GM12878 (cell line): ENCODE measurements at regions of chr9 and their contacts with region 1.

Region 1: DNA sequence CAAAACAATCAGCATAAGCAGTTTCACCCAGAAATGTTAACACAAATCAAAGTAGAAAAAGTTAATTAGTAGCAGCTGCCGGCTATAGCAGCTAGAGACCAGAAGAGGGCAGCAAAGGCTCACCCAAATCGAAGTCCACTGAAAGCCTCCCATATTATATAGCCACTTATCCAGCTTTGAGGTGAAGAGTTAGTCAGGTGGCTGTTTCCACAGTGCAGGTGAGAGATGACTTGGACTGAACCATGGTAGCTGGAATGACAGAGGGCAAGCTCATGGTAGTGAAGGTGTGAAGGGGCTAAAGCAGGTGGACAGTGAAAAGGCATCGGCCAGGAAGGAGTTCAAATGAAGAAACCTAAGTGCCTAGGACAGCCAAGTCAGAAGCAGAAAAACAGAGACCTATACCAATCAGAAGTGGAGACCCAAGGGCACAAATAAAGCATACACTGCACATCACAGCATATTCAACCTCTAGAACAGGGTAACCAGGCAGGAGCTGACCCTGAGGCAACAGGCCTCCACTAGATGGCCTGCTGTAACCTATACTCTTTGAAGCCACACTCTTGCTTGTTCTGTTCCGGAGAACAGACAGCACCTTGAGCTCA is 7.2 kb upstream of the RNF38 start:
- DNase-seq: peak; percentile 25
- ATAC-seq: peak; percentile 95
- H3K4me3 ChIP-seq: no peak overlapping the region
- H3K27ac ChIP-seq: no peak overlapping the region
- H3K4me1 ChIP-seq: no peaks in the 10 kb centered on the region
- H3K27me3 ChIP-seq: no peaks in the 10 kb centered on the region
- CTCF ChIP-seq: peak; percentile 84 to 93 (median 92)
- EP300 ChIP-seq: no peak
- POLR2A ChIP-seq: no peak
- RAD21 ChIP-seq: peak; percentile 87

Region 2: GRCh38 chr9:36382484-36382883 is 24.7 kb before region 1 on chr9:
- CTCF ChIA-PET with region 1: interaction called, 9 read pairs
- POLR2A ChIA-PET with region 1: interaction called, 8 read pairs
- RAD21 ChIA-PET with region 1: interaction called, 6 read pairs
- SMC1A ChIA-PET with region 1: interaction called, 10 read pairs
- in situ Hi-C with region 1: no loop called
- intact Hi-C with region 1: no loop called
- DNase-seq: no peak
- ATAC-seq: peak; percentile 12; the same call in 1 of the 3 replicates
- H3K4me3 ChIP-seq: no peak overlapping the region
- H3K27ac ChIP-seq: peak overlapping the region; percentile 55; the same call in 1 of the 2 replicates
- H3K4me1 ChIP-seq: peaks cover 38% of the 10 kb centered on the region
- H3K27me3 ChIP-seq: no peaks in the 10 kb centered on the region
- CTCF ChIP-seq: no peak
- EP300 ChIP-seq: no peak
- POLR2A ChIP-seq: no peak
- RAD21 ChIP-seq: no peak

Region 3: DNA sequence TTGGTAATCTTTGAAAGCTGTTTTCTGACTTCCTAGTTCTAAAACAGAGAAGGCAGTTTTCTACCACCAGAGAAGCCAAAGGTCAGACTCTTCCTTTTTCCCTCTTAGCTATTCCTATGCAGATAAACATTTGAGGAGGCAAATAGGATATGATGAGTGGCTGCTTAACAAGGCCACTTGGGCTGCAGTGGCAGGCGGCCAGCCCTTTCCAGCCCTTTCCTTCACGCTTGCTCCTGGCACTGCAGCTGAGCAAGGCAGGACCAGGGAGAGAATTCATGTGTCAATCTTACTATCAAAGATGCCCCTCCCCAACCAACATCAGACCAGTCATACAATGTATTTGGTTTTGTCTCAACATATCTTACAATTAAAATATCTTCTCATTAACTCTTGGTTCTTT is 29.7 kb after region 1 on chr9:
- CTCF ChIA-PET with region 1: interaction called, 33 read pairs
- POLR2A ChIA-PET with region 1: interaction called, 3 read pairs
- RAD21 ChIA-PET with region 1: interaction called, 12 read pairs
- SMC1A ChIA-PET with region 1: interaction called, 15 read pairs
- in situ Hi-C with region 1: no loop called
- intact Hi-C with region 1: no loop called
- DNase-seq: no peak
- ATAC-seq: no peak
- H3K4me3 ChIP-seq: no peak overlapping the region
- H3K27ac ChIP-seq: no peak overlapping the region
- H3K4me1 ChIP-seq: no peaks in the 10 kb centered on the region
- H3K27me3 ChIP-seq: no peaks in the 10 kb centered on the region
- CTCF ChIP-seq: no peak
- EP300 ChIP-seq: no peak
- POLR2A ChIP-seq: no peak
- RAD21 ChIP-seq: no peak

Region 4: GRCh38 chr9:36461323-36461722 is 54.1 kb after region 1 on chr9:
- CTCF ChIA-PET with region 1: interaction called, 37 read pairs
- POLR2A ChIA-PET with region 1: interaction called, 4 read pairs
- RAD21 ChIA-PET with region 1: interaction called, 11 read pairs
- SMC1A ChIA-PET with region 1: interaction called, 18 read pairs
- in situ Hi-C with region 1: no loop called
- intact Hi-C with region 1: no loop called
- DNase-seq: no peak
- ATAC-seq: no peak
- H3K4me3 ChIP-seq: no peak overlapping the region
- H3K27ac ChIP-seq: no peak overlapping the region
- H3K4me1 ChIP-seq: peaks cover 14% of the 10 kb centered on the region
- H3K27me3 ChIP-seq: no peaks in the 10 kb centered on the region
- CTCF ChIP-seq: no peak
- EP300 ChIP-seq: no peak
- POLR2A ChIP-seq: no peak
- RAD21 ChIP-seq: no peak

Region 5: GRCh38 chr9:36551129-36551528 is 143.9 kb after region 1 on chr9:
- CTCF ChIA-PET with region 1: interaction called, 421 read pairs
- POLR2A ChIA-PET with region 1: interaction called, 9 read pairs
- RAD21 ChIA-PET with region 1: interaction called, 156 read pairs
- SMC1A ChIA-PET with region 1: interaction called, 287 read pairs
- in situ Hi-C with region 1: loop called (anchors 5 kb)
- intact Hi-C with region 1: loop called (anchors 1 kb)
- DNase-seq: no peak
- ATAC-seq: peak; percentile 19
- H3K4me3 ChIP-seq: no peak overlapping the region
- H3K27ac ChIP-seq: peak overlapping the region; percentile 73
- H3K4me1 ChIP-seq: peaks cover 17% of the 10 kb centered on the region
- H3K27me3 ChIP-seq: no peaks in the 10 kb centered on the region
- CTCF ChIP-seq: no peak
- EP300 ChIP-seq: no peak
- POLR2A ChIP-seq: no peak
- RAD21 ChIP-seq: no peak

Region 6: GRCh38 chr9:36632892-36633291 is 225.7 kb after region 1 on chr9:
- CTCF ChIA-PET with region 1: interaction called, 17 read pairs
- POLR2A ChIA-PET with region 1: no interaction called
- RAD21 ChIA-PET with region 1: interaction called, 8 read pairs
- SMC1A ChIA-PET with region 1: interaction called, 5 read pairs
- in situ Hi-C with region 1: no loop called
- intact Hi-C with region 1: no loop called
- DNase-seq: no peak
- ATAC-seq: peak; percentile 63
- H3K4me3 ChIP-seq: no peak overlapping the region
- H3K27ac ChIP-seq: no peak overlapping the region
- H3K4me1 ChIP-seq: no peaks in the 10 kb centered on the region
- H3K27me3 ChIP-seq: no peaks in the 10 kb centered on the region
- CTCF ChIP-seq: peak; percentile 46 to 56 (median 52); a peak in 5 of 6 replicates
- EP300 ChIP-seq: no peak
- POLR2A ChIP-seq: no peak
- RAD21 ChIP-seq: peak; percentile 57

Region 7: GRCh38 chr9:37382161-37382981 is 975.1 kb after region 1 on chr9:
- CTCF ChIA-PET with region 1: no interaction called
- POLR2A ChIA-PET with region 1: no interaction called
- RAD21 ChIA-PET with region 1: no interaction called
- SMC1A ChIA-PET with region 1: no interaction called
- in situ Hi-C with region 1: no loop called
- intact Hi-C with region 1: no loop called
- DNase-seq: peak; percentile 70
- ATAC-seq: peak; percentile 57
- H3K4me3 ChIP-seq: no peak overlapping the region
- H3K27ac ChIP-seq: peak overlapping the region; percentile 92
- H3K4me1 ChIP-seq: peaks cover 65% of the 10 kb centered on the region
- H3K27me3 ChIP-seq: no peaks in the 10 kb centered on the region
- CTCF ChIP-seq: no peak
- EP300 ChIP-seq: peak; percentile 75 to 80
- POLR2A ChIP-seq: no peak
- RAD21 ChIP-seq: peak; percentile 9; the same call in 1 of the 2 replicates